Ovary (tissue), 10 donors: ENCODE measurements at regions of chr17 and their contacts with region 1.

Region 1: DNA sequence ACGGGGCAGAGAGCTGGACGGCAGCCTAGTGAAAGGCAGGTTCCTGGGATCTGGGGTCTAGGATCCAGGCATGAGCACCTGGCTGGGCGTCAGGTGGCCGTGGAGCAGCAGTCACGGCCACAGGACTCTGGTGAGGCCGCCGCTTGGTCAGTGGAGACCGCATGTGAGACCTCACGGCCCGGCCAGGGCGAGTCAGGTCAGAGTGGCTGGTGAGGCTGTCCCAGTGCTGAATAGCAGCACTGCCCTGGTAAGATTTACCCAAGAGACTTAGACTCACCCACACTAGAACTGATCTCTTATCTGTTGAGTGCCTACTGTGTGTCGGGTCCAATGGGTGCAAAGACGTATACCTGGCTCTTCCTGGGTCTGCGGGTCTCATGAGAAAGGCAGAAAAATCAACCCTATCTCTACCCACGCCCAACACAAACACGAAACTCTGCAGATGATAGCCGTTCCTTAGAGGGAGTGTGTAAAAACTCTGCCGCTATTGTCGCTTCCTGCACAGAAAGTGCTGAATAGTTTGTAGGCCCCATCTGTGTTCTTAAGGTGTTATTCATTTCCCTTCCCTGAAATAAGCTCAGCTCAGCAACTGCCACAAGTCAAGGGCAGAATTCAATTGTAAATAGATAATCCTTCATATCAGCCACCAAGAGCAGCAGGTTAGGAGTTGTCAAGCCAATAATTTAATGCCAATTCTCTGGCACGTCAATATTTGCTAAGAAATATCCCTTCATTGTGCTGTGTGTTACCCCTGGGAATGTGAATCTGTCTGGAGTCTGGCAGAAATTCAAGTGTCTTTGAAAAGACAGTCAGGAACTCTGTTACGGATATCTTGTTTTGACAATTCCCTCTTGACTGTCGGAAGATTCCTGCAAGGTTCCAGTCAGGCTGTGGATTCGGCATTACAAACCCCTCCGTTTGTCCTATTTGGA is 240.0 kb downstream of the NTN1 start:
- DNase-seq: no peak
- H3K4me3 ChIP-seq: no peak overlapping the region
- H3K27ac ChIP-seq: no peak overlapping the region
- H3K4me1 ChIP-seq: no peaks in the 10 kb centered on the region
- H3K27me3 ChIP-seq: no peaks in the 10 kb centered on the region
- CTCF ChIP-seq: no peak
- EP300 ChIP-seq: no peak
- POLR2A ChIP-seq: no peak

Region 2: GRCh38 chr17:9054126-9054975 is 207.0 kb before region 1 on chr17:
- intact Hi-C with region 1: no loop called
- DNase-seq: no peak
- H3K4me3 ChIP-seq: no peak overlapping the region
- H3K27ac ChIP-seq: no peak overlapping the region
- H3K4me1 ChIP-seq: no peaks in the 10 kb centered on the region
- H3K27me3 ChIP-seq: no peaks in the 10 kb centered on the region
- CTCF ChIP-seq: no peak
- EP300 ChIP-seq: no peak
- POLR2A ChIP-seq: no peak

Region 3: DNA sequence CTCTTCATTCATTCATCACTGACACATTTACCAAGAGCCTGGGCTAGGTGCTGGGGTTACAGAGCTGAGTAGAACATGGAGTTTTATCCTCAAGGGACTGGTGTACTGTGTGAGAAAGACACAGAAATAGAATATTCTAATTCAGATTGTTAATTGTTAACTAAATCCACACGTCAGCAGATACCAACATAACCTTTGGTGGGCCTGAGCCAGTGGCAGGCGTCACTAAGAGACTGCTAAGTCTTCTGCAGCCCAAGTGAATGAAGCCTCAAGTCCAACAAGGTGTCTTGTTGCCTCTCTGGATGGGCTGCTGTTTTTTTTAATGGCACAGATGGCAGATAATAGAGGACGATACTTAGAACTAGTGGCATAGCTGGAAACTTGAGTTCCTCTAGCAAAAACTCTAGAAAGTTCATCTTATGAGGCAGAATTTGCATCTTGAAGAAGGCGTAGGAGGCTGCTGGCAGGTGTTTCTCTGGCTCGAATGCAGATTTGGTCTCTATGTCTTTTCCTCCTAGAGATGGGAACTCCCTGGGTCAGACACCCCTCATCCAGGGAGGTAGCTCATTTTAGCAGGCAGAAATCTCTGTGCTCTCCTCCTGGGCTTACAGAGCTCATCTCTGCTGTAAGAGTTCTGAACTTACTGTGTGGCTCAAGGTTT is 60.5 kb before region 1 on chr17:
- intact Hi-C with region 1: loop called in 1 of 4 experiments (anchors 10 kb)
- DNase-seq: no peak
- H3K4me3 ChIP-seq: no peak overlapping the region
- H3K27ac ChIP-seq: no peak overlapping the region
- H3K4me1 ChIP-seq: no peaks in the 10 kb centered on the region
- H3K27me3 ChIP-seq: no peaks in the 10 kb centered on the region
- CTCF ChIP-seq: no peak
- EP300 ChIP-seq: no peak
- POLR2A ChIP-seq: no peak

Region 4: GRCh38 chr17:9247401-9247938 is 13.9 kb before region 1 on chr17:
- intact Hi-C with region 1: loop called in 1 of 4 experiments (anchors 2 kb)
- DNase-seq: no peak
- H3K4me3 ChIP-seq: no peak overlapping the region
- H3K27ac ChIP-seq: no peak overlapping the region
- H3K4me1 ChIP-seq: no peaks in the 10 kb centered on the region
- H3K27me3 ChIP-seq: no peaks in the 10 kb centered on the region
- CTCF ChIP-seq: no peak
- EP300 ChIP-seq: no peak
- POLR2A ChIP-seq: no peak